Activated CD8-positive, alpha-beta T cell treated with anti-CD3 and anti-CD28 coated beads, Interleukin-2, amount 10 ng/mL, durations not matched to agents 7 days and 5 days (primary cell): ENCODE measurements at regions of chr19 and their contacts with region 1.

Region 1: GRCh38 chr19:18675779-18676178 is 7.7 kb upstream of the CRTC1 start:
- DNase-seq: peak; percentile 52
- ATAC-seq: no peak
- H3K4me3 Mint-ChIP-seq: no peak overlapping the region
- H3K27ac Mint-ChIP-seq: no peak overlapping the region
- H3K4me1 Mint-ChIP-seq: no peaks in the 10 kb centered on the region
- H3K27me3 Mint-ChIP-seq: no peaks in the 10 kb centered on the region

Region 2: GRCh38 chr19:18594096-18594823 is 81.5 kb before region 1 on chr19:
- CTCF ChIA-PET with region 1: interaction called, 14 read pairs
- POLR2A ChIA-PET with region 1: no interaction called
- DNase-seq: peak; percentile 75
- ATAC-seq: peak; percentile 59
- H3K4me3 Mint-ChIP-seq: peak overlapping the region; percentile 64
- H3K27ac Mint-ChIP-seq: no peak overlapping the region
- H3K4me1 Mint-ChIP-seq: peaks cover 29% of the 10 kb centered on the region
- H3K27me3 Mint-ChIP-seq: peaks cover 2% of the 10 kb centered on the region

Region 3: GRCh38 chr19:18649371-18650020 is 26.3 kb before region 1 on chr19:
- CTCF ChIA-PET with region 1: no interaction called
- POLR2A ChIA-PET with region 1: no interaction called
- DNase-seq: no peak
- ATAC-seq: no peak
- H3K4me3 Mint-ChIP-seq: no peak overlapping the region
- H3K27ac Mint-ChIP-seq: no peak overlapping the region
- H3K4me1 Mint-ChIP-seq: peaks cover 15% of the 10 kb centered on the region
- H3K27me3 Mint-ChIP-seq: no peaks in the 10 kb centered on the region